KBM-7 (cell line): ENCODE measurements at regions of chr20 and their contacts with region 1.

Region 1: DNA sequence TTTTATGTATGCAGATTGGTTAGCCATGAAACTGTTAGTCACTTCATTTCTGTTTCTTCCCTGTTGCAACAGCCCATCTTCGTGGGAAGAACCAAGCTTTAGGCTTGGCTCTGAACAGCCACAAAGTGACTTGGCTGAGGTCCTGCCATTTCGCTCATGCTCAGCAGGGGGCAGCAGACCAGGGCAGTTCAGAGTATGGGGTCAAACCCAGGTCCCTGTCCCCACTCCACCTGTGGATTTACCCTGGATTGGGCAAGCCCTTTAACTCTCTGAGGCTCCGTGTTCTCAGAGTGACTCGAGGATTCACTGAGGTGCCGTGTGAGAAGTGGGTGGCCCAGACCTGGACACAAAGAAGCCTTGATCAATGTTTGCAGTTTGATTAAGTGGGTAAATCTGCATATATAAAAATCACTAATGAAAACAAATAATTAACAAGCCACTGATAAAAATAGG is 19.8 kb upstream of the MAP1LC3A start:
- DNase-seq: peak; percentile 68

Region 2: DNA sequence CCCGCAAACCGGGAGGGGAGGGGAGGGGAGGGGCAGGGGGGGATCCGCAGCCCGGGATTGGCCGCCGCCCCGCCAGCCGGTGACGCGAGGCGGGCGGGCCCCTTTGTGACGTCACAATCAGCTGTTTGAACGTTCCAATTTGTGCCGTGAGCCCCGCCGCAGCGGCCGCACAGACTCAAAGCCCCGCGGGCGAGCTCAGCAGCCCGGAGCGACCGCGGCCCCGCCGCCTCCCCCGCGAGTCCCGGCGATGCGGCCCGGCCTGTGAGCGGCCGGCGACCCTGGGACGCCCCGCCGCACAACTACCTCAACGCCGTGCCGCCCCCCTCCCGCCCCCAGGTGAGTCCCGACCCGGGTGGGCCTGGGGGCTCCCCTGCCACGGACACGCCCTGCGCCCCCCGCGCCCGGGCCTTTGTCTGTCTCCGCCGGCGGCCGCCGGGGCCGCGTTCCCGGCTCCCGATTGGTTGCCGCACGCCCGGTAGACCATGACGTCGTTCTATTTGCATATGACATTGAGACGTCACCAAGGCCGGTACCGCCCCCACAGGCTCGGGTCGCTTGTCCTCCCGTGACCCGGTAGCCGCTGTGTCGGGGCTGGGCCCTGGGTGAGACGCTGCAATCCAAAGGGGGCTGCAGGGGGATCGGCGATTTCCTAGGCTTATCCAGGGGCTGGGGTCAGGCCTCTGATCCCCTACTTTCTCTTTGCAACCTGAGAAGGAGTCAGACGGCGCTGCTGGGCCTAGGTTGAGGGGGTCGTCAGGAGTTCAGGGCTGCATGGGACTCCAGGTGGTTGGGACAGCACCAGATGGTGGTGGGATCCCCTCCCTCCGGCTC is 165.7 kb after region 1 on chr20 and contains the start of gene TP53INP2:
- in situ Hi-C with region 1: loop called (anchors 10 kb)
- DNase-seq: peak; percentile 76

Region 3: GRCh38 chr20:34753706-34754461 is 215.2 kb after region 1 on chr20:
- in situ Hi-C with region 1: no loop called
- DNase-seq: no peak